ENCODE measurements at regions of chr21 and their contacts with region 1.

Region 1: DNA sequence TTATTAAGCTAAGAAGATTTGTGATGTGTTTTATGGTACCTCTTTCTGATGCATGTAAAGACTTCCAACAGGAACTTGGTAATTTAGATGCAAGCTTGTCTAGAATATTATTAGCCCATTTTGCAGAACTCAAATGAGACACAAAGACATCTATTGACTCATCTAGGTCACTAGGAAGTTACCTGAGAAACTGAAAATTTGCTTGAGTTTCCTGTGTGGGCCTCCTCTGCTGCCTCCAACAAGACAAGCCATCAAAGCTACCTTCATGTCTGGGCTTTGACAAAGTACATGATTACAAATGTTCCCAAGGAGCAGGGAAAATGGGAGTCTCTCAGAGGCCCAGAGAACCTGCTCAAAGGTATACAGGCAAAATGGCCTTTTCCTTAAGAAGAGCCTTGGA is 5.6 kb downstream of the RUNX1 start:
- DNase-seq: no peak
- H3K4me3 ChIP-seq: no peak overlapping the region
- H3K27ac ChIP-seq: no peak overlapping the region
- H3K4me1 ChIP-seq: peaks cover 0 to 21% (median 11%) of the 10 kb centered on the region in 4 donors
- H3K27me3 ChIP-seq: no peaks in the 10 kb centered on the region
- CTCF ChIP-seq: no peak

Region 2: DNA sequence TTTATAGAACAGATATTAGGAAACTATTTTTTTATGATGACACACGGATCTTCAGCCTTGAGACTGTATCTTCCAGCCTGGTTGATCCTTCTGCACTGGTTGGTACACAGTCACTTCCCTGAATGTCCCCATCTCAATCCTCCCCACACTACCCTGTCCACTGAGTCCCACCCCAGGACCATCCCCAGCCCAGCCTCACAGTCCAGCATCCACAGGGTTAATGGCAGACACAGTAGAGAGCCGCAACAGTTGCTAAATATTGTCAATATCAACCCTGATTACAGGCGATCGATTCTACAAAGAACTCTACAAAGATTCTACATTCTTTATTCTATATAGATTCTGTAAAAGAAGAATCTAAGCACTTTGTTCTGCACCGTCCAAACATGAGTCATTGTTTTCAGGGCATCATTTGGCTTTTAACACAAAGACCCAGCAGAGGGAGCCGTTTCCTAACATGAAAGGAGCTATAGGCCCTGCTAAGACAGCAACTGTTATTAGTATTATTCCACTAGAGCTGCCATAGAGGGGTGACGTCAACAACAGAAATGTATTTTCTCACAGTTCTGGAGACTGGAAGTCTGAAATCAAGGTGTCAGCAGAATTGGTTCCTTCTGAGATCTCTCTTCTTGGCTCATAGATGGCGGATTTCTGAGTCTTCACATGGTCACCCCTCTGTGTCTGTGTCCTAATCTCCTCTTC is 1843.9 kb before region 1 on chr21:
- intact Hi-C with region 1: no loop called
- DNase-seq: peak; percentile 83 to 88
- H3K4me3 ChIP-seq: no peak overlapping the region
- H3K27ac ChIP-seq: no peak overlapping the region
- H3K4me1 ChIP-seq: peaks cover 0 to 15% (median 2%) of the 10 kb centered on the region in 4 donors
- H3K27me3 ChIP-seq: no peaks in the 10 kb centered on the region
- CTCF ChIP-seq: peak; percentile 77 to 85

Region 3: DNA sequence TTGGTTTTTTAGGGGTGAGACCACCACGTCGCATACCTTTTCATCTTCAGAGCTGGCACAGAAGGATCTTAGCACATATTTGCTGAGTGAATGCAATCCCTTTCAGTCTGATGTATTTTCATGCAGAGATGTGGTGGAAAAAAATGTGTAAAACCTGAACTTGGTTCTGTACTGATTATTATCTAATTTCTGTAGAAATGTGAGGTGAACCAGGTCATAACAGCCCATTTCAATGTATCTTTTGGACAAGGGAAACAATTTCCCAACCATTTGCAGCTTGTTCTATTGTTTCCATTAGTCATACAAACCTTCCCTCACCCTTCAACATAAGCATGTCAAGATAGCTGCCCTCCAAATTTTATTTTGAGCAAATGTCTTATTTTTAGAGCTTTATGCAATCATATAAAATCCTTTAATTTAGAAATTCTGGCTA is 52.3 kb after region 1 on chr21:
- intact Hi-C with region 1: no loop called
- DNase-seq: no peak
- H3K4me3 ChIP-seq: no peak overlapping the region
- H3K27ac ChIP-seq: no peak overlapping the region
- H3K4me1 ChIP-seq: peaks cover 0 to 9% (median 2%) of the 10 kb centered on the region in 4 donors
- H3K27me3 ChIP-seq: no peaks in the 10 kb centered on the region
- CTCF ChIP-seq: no peak

Region 4: GRCh38 chr21:36606287-36606982 is 1562.9 kb after region 1 on chr21:
- intact Hi-C with region 1: loop called (anchors 5 kb)
- DNase-seq: no peak
- H3K4me3 ChIP-seq: no peak overlapping the region
- H3K27ac ChIP-seq: no peak overlapping the region
- H3K4me1 ChIP-seq: no peaks in the 10 kb centered on the region
- H3K27me3 ChIP-seq: peaks cover 0 to 28% of the 10 kb centered on the region in 2 donors
- CTCF ChIP-seq: no peak

Measured in tibial artery (tissue), 4 donors.